BJ (cell line): ENCODE measurements at regions of chr1 and their contacts with region 1.

Region 1: GRCh38 chr1:26252718-26253117 is 18.7 kb downstream of the CEP85 start:
- DNase-seq: no peak
- H3K4me3 ChIP-seq: no peak overlapping the region
- H3K27me3 ChIP-seq: no peaks in the 10 kb centered on the region
- CTCF ChIP-seq: no peak

Region 2: GRCh38 chr1:26233903-26234643 is 18.6 kb before region 1 on chr1 and contains the start of gene CEP85:
- CTCF ChIA-PET with region 1: interaction called, 10 read pairs
- POLR2A ChIA-PET with region 1: no interaction called
- DNase-seq: peak; percentile 70
- H3K4me3 ChIP-seq: peak within 1 kb of the TSS; percentile 64
- H3K27me3 ChIP-seq: no peaks in the 10 kb centered on the region
- CTCF ChIP-seq: peak; percentile 91
- polyA plus RNA-seq, gene CEP85: 9.4 and 10.8 TPM in 2 replicates